BJ (cell line): ENCODE measurements at regions of chr1 and their contacts with region 1.

Region 1: DNA sequence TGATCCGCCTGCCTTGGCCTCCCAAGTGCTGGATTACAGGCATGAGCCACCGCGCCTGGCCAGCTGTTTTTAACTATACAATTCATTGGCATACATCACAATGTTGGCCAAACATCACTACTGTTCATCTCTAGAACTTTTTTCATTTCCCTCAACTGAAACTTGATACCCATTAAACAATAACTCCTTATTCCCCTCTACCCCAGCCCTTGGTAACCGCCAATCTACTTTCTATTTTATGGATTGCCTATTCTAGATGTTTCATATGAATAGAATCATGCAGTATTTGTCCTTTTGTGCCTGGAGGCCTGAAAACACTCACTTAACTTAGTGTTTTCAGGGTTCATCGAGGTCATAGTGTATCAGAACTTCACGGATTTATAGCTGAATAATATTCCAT is 16.2 kb downstream of the BTF3L4 start:
- DNase-seq: no peak
- H3K4me3 ChIP-seq: no peak overlapping the region
- H3K27me3 ChIP-seq: no peaks in the 10 kb centered on the region
- CTCF ChIP-seq: no peak

Region 2: DNA sequence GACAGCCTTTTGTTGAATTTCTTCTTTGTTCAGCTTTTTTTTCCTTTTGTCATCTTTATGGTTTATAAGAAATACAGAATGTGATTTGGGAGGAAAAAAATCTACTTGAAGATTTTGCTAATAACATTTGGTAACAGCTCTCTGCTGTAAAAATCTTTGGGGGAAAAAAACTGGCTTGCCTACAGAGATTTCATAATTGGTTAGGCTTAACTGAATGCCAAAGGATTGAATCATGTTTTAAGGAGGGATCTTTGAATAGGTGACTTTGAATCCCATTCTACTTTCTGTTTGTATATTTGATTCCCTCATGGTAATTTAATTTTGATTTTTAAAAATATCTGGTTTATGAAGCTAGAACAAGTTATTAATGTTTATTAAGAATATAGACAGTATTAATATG is 13.0 kb before region 1 on chr1:
- CTCF ChIA-PET with region 1: no interaction called
- POLR2A ChIA-PET with region 1: interaction called, 17 read pairs
- DNase-seq: peak; percentile 23
- H3K4me3 ChIP-seq: no peak overlapping the region
- H3K27me3 ChIP-seq: no peaks in the 10 kb centered on the region
- CTCF ChIP-seq: no peak